Panc1 (cell line): ENCODE measurements at regions of chr5 and their contacts with region 1.

Region 1: DNA sequence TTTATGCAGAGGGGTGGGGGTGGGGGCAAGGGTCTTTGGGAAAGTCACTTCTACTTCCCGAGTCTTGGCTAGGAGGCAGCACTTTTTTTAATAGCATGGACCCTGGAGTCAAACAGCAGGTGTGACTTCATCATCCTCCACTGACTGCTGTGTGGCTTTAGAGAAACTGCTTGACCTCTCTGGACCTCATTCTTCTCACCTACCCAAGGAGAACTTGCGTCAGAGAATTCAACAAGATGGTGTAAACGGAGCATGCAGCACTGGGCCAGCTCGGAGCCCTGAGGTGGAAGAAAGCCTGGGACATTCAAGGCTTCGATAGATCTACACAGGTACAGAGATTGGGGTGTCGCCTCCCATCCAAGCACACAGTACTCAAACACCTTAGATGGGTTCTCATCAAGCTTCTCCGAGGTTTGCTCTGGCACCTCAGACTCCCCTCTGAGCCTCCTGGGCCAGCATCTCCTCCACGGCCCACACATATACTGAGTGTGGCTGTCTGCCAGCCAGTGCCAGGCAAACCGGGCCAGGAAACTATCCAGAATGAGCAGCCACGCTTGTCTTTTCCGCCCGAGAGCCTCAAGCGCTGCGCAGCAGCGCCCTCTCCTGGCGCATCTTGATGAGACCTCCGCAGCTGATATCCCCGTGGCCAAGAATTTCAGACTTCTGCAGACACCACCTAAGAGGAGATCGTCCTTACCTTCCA is 4.6 kb upstream of the SLC25A48 start:
- DNase-seq: peak; percentile 42
- ATAC-seq: peak; percentile 55; the same call in 1 of the 2 replicates
- H3K4me3 ChIP-seq: no peak overlapping the region
- H3K27ac ChIP-seq: no peak overlapping the region
- H3K4me1 ChIP-seq: 0 out of 2 replicates have a peak, but pooled peaks cover under 1% of the 10 kb centered on the region
- H3K27me3 ChIP-seq: peaks cover 15% of the 10 kb centered on the region
- CTCF ChIP-seq: peak; percentile 90

Region 2: DNA sequence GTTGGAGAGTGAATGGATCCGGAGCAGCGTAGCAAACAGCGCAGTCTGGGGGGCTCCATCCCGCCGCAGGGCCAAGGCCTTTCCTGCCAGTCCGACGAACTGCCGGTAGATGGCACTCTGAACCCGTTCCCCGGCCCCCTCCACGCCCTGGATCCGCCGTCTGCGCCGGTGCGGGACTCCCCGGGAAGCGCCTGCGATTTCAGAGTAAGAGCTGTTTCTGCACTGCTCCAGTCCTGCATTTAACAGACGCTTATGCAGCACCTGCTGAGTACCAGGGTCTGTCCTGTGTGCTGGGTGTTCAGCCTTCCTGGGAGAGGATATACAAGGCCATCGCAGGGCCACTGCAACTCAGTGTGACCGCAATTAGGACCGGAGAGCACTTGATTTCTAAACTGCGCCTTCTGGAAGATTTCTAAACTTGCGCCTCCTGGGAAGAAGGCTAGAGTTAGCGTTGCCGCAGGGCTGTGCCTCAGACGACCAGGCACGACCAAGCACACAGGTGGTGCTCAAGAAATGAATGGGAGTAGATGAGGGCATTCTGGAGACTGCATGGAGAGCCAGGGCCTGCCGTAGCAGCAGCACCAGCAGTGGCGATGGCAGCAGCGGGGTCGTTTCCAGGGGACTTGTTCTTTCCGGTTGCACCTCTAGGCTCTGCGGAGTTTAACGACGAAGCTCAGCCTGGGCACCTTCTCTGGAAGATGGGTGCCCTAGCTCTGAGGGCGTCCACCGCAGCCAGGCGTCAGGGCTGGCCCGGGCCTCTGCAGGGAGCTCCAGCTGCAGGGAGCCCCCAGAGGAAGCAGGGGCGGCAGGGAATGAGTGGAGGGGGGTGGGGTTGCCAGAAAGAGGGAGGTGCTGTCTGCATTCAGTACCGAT is 363.4 kb before region 1 on chr5:
- CTCF ChIA-PET with region 1: no interaction called
- POLR2A ChIA-PET with region 1: no interaction called
- in situ Hi-C with region 1: loop called (anchors 25 kb)
- intact Hi-C with region 1: no loop called
- DNase-seq: no peak
- ATAC-seq: peak; percentile 94
- H3K4me3 ChIP-seq: no peak overlapping the region
- H3K27ac ChIP-seq: no peak overlapping the region
- H3K4me1 ChIP-seq: peaks cover 2% of the 10 kb centered on the region; the same call in 1 of the 2 replicates
- H3K27me3 ChIP-seq: peaks cover 18% of the 10 kb centered on the region
- CTCF ChIP-seq: peak; percentile 95

Region 3: DNA sequence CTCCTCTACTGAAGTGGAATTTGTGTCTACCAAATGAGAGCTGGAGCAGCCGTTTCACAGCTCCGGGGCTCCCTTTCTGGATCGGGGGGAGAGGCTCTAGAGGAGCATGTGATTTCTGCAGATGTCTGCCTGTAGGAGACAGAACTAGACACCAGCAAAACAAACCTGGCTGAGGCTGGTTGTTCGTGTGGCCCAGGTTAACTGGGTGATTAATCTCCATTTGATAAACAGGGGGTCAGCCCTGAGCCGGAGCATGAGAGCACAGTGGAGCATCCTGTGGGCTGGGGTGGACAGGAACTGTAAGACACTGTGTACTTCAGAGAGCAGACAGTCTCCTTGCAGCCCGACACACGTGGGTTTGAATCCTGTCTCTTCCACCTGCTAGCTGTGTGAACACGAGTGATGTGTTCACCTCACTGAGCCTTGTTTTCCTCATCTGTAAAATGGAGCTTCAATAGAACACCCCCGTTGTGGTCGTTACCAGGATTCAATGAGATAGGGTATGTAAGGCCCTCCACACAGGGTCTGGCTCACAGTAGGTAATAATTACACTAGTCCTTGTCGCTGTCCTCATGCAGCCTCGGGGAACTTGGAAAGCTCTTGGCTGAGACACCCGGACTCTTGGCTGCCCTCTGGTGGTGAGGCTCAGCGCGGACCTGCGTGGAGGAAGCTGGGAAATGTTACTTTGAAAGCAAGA is 264.0 kb before region 1 on chr5:
- CTCF ChIA-PET with region 1: interaction called, 11 read pairs
- POLR2A ChIA-PET with region 1: no interaction called
- in situ Hi-C with region 1: no loop called
- intact Hi-C with region 1: loop called (anchors 2 kb)
- DNase-seq: peak; percentile 43
- ATAC-seq: peak; percentile 83
- H3K4me3 ChIP-seq: no peak overlapping the region
- H3K27ac ChIP-seq: no peak overlapping the region
- H3K4me1 ChIP-seq: no peaks in the 10 kb centered on the region
- H3K27me3 ChIP-seq: peaks cover 4% of the 10 kb centered on the region; the same call in 1 of the 2 replicates
- CTCF ChIP-seq: peak; percentile 94

Region 4: DNA sequence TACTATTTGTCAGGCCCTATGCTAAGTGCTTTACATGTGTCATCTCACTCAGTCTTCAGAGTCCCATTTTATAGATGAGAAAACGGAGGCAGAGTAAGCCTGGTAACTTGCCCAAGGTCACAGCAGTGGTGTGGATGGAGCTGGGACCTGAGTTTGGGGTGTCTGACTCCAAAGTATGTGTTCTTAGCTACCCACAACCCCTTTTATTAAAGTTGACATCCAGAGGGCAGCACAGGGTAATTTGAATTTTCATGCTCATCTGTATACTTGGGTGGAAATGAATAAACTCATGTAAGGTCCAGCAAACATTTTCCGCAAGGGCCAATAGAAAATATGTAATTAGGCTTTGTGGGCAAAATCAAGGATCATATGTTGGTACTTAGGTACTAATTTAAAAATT is 88.8 kb before region 1 on chr5:
- CTCF ChIA-PET with region 1: no interaction called
- POLR2A ChIA-PET with region 1: no interaction called
- in situ Hi-C with region 1: no loop called
- intact Hi-C with region 1: loop called (anchors 5 kb)
- DNase-seq: no peak
- ATAC-seq: no peak
- H3K4me3 ChIP-seq: no peak overlapping the region
- H3K27ac ChIP-seq: no peak overlapping the region
- H3K4me1 ChIP-seq: no peaks in the 10 kb centered on the region
- H3K27me3 ChIP-seq: no peaks in the 10 kb centered on the region
- CTCF ChIP-seq: no peak; the same call in 1 of the 2 replicates